CD4-positive, alpha-beta memory T cell (primary cell): ENCODE measurements at regions of chr13 and their contacts with region 1.

Region 1: GRCh38 chr13:43905435-43906031 is 25.8 kb downstream of the LACC1 start:
- DNase-seq: peak; percentile 44 to 58 (median 54)
- H3K4me3 ChIP-seq: no peak overlapping the region
- H3K4me3 Mint-ChIP-seq: no peak overlapping the region
- H3K27ac ChIP-seq: no peak overlapping the region
- H3K27ac Mint-ChIP-seq: no peak overlapping the region
- H3K4me1 ChIP-seq: no peaks in the 10 kb centered on the region
- H3K4me1 Mint-ChIP-seq: peaks cover 0 to 2% (median 0%) of the 10 kb centered on the region in 4 donors
- H3K27me3 ChIP-seq: no peaks in the 10 kb centered on the region
- H3K27me3 Mint-ChIP-seq: peaks cover 5 to 15% of the 10 kb centered on the region in 2 donors

Region 2: DNA sequence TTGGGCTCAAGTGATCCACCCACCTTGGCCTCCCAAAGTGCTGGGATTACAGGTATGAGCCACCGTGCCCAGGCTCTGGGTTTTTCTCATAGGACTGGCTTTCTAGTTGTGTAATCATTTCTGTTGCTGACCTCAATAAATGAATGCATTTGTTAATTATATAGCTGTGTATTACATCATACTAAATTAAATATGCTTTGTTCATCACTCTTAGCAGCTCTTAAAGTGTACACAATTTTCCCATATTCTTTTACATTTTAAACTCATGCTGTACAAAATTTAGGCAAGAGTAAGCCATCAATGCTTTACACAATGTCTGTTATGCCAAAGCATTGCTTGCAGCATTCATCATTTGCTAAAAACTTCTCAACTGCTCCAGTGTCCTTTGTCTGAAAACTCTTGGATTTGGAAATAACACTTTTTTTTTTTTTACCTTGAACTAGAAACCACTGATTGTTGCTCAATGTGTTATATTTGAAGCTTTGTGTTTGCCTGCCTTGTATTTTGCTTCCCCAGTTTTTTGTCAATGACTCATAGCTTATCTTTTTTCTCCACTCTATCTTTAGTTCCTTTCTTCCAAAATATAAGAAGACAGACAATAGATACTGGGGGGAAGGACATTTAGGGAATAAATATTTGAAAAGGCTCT is 57.4 kb before region 1 on chr13:
- CTCF ChIA-PET with region 1: no interaction called
- POLR2A ChIA-PET with region 1: no interaction called
- intact Hi-C with region 1: no loop called
- DNase-seq: no peak
- H3K4me3 ChIP-seq: no peak overlapping the region
- H3K4me3 Mint-ChIP-seq: no peak overlapping the region
- H3K27ac ChIP-seq: no peak overlapping the region
- H3K27ac Mint-ChIP-seq: no peak overlapping the region
- H3K4me1 ChIP-seq: no peaks in the 10 kb centered on the region
- H3K4me1 Mint-ChIP-seq: no peaks in the 10 kb centered on the region
- H3K27me3 ChIP-seq: no peaks in the 10 kb centered on the region
- H3K27me3 Mint-ChIP-seq: peaks cover 0 to 2% of the 10 kb centered on the region in 2 donors

Region 3: GRCh38 chr13:43946281-43946680 is 40.7 kb after region 1 on chr13:
- CTCF ChIA-PET with region 1: no interaction called
- POLR2A ChIA-PET with region 1: no interaction called
- intact Hi-C with region 1: no loop called
- DNase-seq: no peak
- H3K4me3 ChIP-seq: no peak overlapping the region
- H3K4me3 Mint-ChIP-seq: no peak overlapping the region
- H3K27ac ChIP-seq: no peak overlapping the region
- H3K27ac Mint-ChIP-seq: no peak overlapping the region
- H3K4me1 ChIP-seq: no peaks in the 10 kb centered on the region
- H3K4me1 Mint-ChIP-seq: no peaks in the 10 kb centered on the region
- H3K27me3 ChIP-seq: no peaks in the 10 kb centered on the region
- H3K27me3 Mint-ChIP-seq: peaks cover 3 to 7% of the 10 kb centered on the region in 2 donors

Region 4: GRCh38 chr13:44050450-44051063 is 145.0 kb after region 1 on chr13:
- CTCF ChIA-PET with region 1: no interaction called
- POLR2A ChIA-PET with region 1: no interaction called
- intact Hi-C with region 1: loop called (anchors 10 kb)
- DNase-seq: peak in 4 of 5 donors; percentile 21 to 36 (median 32)
- H3K4me3 ChIP-seq: no peak overlapping the region
- H3K4me3 Mint-ChIP-seq: no peak overlapping the region
- H3K27ac ChIP-seq: no peak overlapping the region
- H3K27ac Mint-ChIP-seq: no peak overlapping the region
- H3K4me1 ChIP-seq: no peaks in the 10 kb centered on the region
- H3K4me1 Mint-ChIP-seq: peaks cover 0 to 4% (median 3%) of the 10 kb centered on the region in 4 donors
- H3K27me3 ChIP-seq: peaks cover 5% of the 10 kb centered on the region
- H3K27me3 Mint-ChIP-seq: peaks cover 20 to 36% of the 10 kb centered on the region in 2 donors

Region 5: GRCh38 chr13:44191504-44192171 is 286.1 kb after region 1 on chr13:
- CTCF ChIA-PET with region 1: interaction called, 4 read pairs
- POLR2A ChIA-PET with region 1: no interaction called
- intact Hi-C with region 1: loop called (anchors 5 kb)
- DNase-seq: peak; percentile 55 to 69 (median 63)
- H3K4me3 ChIP-seq: peak overlapping the region in 1 of 2 donors; percentile 25
- H3K4me3 Mint-ChIP-seq: peak overlapping the region; percentile 4 to 68 (median 61)
- H3K27ac ChIP-seq: no peak overlapping the region
- H3K27ac Mint-ChIP-seq: peak overlapping the region; percentile 73 to 90 (median 78)
- H3K4me1 ChIP-seq: peaks cover 12% of the 10 kb centered on the region
- H3K4me1 Mint-ChIP-seq: peaks cover 18 to 30% (median 25%) of the 10 kb centered on the region in 4 donors
- H3K27me3 ChIP-seq: no peaks in the 10 kb centered on the region
- H3K27me3 Mint-ChIP-seq: peaks cover 0 to 2% of the 10 kb centered on the region in 2 donors

Region 6: GRCh38 chr13:44435142-44435982 is 529.8 kb after region 1 on chr13:
- CTCF ChIA-PET with region 1: interaction called, 68 read pairs
- POLR2A ChIA-PET with region 1: interaction called, 3 read pairs
- intact Hi-C with region 1: loop called (anchors 1 kb)
- DNase-seq: peak; percentile 77 to 96 (median 82)
- H3K4me3 ChIP-seq: peak overlapping the region; percentile 54 to 63
- H3K4me3 Mint-ChIP-seq: peak overlapping the region; percentile 87 to 93 (median 90)
- H3K27ac ChIP-seq: peak overlapping the region; percentile 23
- H3K27ac Mint-ChIP-seq: peak overlapping the region; percentile 44 to 92 (median 89)
- H3K4me1 ChIP-seq: peaks cover 30% of the 10 kb centered on the region
- H3K4me1 Mint-ChIP-seq: peaks cover 15 to 35% (median 22%) of the 10 kb centered on the region in 4 donors
- H3K27me3 ChIP-seq: peaks cover 14% of the 10 kb centered on the region
- H3K27me3 Mint-ChIP-seq: peaks cover 6 to 9% of the 10 kb centered on the region in 2 donors

Region 7: DNA sequence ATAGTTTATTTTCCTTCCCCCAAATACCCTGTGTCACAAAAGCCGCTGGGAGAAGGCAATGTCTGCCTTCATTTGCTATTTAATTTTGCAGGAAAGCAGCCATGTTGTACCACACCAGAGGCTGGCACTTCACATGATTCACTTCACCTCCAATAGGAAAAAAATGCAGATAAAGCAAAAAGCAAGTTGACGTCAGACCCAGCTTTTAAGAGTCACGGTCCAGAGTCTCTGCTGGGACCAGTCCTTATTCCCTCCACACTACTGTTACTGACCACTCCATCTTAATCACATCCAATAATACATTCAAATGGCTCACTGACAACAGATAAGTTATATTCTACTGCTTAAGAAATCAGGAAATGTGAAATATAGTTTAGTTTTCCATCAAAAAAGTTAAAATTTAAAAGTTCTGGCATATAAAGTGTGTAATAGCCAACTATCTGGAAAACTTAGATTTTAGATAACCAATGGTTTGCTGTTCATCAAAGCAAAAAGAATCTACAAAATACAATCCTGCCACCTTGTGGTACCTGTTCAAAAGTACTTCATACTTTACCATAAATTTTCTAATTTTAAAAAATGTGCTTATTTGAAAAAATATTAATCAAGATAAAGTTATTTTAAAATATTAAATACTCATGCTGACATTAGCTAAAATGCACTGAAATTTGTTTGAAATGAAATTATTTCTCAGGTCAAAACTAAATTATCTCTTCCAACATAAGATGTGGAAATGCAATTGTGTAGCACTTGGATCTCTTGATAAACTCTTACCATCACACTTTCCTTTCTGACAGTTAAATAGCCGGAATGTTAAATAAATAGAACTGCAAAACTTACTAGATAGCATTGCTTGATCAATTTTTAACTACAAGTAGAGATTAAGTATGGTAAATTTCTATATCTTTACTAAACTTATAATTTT is 565.4 kb after region 1 on chr13:
- CTCF ChIA-PET with region 1: interaction called, 30 read pairs
- POLR2A ChIA-PET with region 1: no interaction called
- intact Hi-C with region 1: loop called (anchors 1 kb)
- DNase-seq: peak in 2 of 5 donors; percentile 16 to 20
- H3K4me3 ChIP-seq: no peak overlapping the region
- H3K4me3 Mint-ChIP-seq: no peak overlapping the region
- H3K27ac ChIP-seq: no peak overlapping the region
- H3K27ac Mint-ChIP-seq: no peak overlapping the region
- H3K4me1 ChIP-seq: no peaks in the 10 kb centered on the region
- H3K4me1 Mint-ChIP-seq: peaks cover 0 to 4% (median 0%) of the 10 kb centered on the region in 4 donors
- H3K27me3 ChIP-seq: no peaks in the 10 kb centered on the region
- H3K27me3 Mint-ChIP-seq: no peaks in the 10 kb centered on the region

Region 8: GRCh38 chr13:45310341-45311125 is 1405.0 kb after region 1 on chr13:
- CTCF ChIA-PET with region 1: no interaction called
- POLR2A ChIA-PET with region 1: no interaction called
- intact Hi-C with region 1: loop called (anchors 2 kb)
- DNase-seq: no peak
- H3K4me3 ChIP-seq: peak overlapping the region; percentile 47 to 56
- H3K4me3 Mint-ChIP-seq: peak overlapping the region; percentile 88 to 94 (median 91)
- H3K27ac ChIP-seq: no peak overlapping the region
- H3K27ac Mint-ChIP-seq: peak overlapping the region in 3 of 7 donors; percentile 35 to 87 (median 36)
- H3K4me1 ChIP-seq: peaks cover 19% of the 10 kb centered on the region
- H3K4me1 Mint-ChIP-seq: peaks cover 12 to 22% (median 17%) of the 10 kb centered on the region in 4 donors
- H3K27me3 ChIP-seq: no peaks in the 10 kb centered on the region
- H3K27me3 Mint-ChIP-seq: peaks cover 3 to 5% of the 10 kb centered on the region in 2 donors